K562 (cell line): ENCODE measurements at regions of chr11 and their contacts with region 1.

Region 1: GRCh38 chr11:34667810-34668582 is 47.1 kb downstream of the EHF start:
- DNase-seq: no peak
- ATAC-seq: no peak
- H3K4me3 ChIP-seq: no peak overlapping the region
- H3K27ac ChIP-seq: no peak overlapping the region
- H3K4me1 ChIP-seq: peaks cover 0 to 5% of the 10 kb centered on the region in 2 experiments; a peak in 1 of 5 replicates
- H3K27me3 ChIP-seq: no peaks in the 10 kb centered on the region
- CTCF ChIP-seq: no peak
- EP300 ChIP-seq: no peak
- POLR2A ChIP-seq: no peak
- RAD21 ChIP-seq: no peak

Region 2: DNA sequence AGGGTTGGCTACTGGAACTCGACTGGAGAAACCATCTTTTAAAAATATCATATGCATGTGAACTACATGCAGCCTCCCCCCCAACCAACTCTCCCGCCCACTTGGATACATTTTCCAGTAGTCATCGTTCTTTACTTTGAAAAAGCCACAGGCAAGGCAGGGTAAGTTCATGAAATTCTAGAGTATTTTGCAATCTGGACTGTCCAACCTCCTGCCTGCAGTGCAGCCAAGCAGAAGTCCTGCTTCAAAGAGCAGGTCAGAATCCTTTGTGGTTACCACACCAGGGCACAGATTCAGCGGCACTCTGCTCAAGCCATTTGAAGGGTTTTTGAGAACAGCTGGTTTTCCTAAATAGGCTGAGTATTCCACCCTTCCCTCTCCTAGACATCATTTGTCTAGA is 166.5 kb before region 1 on chr11:
- CTCF ChIA-PET with region 1: no interaction called
- POLR2A ChIA-PET with region 1: no interaction called
- in situ Hi-C with region 1: no loop called
- intact Hi-C with region 1: no loop called
- DNase-seq: no peak
- ATAC-seq: no peak
- H3K4me3 ChIP-seq: no peak overlapping the region
- H3K27ac ChIP-seq: no peak overlapping the region
- H3K4me1 ChIP-seq: no peaks in the 10 kb centered on the region; a peak in 1 of 5 replicates
- H3K27me3 ChIP-seq: peaks cover 3 to 8% of the 10 kb centered on the region in 2 experiments; a peak in 3 of 5 replicates
- CTCF ChIP-seq: no peak
- EP300 ChIP-seq: no peak
- POLR2A ChIP-seq: no peak
- RAD21 ChIP-seq: no peak

Region 3: DNA sequence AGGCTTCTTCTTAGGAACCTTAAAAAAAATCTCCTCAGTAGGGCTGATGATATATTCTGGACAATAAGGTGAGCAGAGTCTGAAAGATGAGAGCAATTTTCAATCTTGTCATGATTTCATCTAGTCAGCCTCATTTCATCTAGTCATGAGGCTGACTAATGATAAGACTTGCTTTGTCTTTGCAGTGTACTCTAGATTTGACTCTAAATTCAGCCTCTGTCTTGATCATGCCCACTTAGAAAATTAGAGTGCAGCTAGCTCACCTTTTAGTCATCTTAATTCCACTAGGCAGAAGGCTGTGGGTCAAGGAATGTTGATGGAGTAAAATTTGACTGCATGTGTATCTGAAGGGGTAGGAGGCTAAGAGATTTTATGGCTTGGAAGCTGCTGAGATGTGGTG is 41.6 kb before region 1 on chr11:
- CTCF ChIA-PET with region 1: no interaction called
- POLR2A ChIA-PET with region 1: interaction called, 3 read pairs
- in situ Hi-C with region 1: no loop called
- intact Hi-C with region 1: loop called (anchors 2 kb)
- DNase-seq: no peak
- ATAC-seq: no peak
- H3K4me3 ChIP-seq: no peak overlapping the region
- H3K27ac ChIP-seq: no peak overlapping the region
- H3K4me1 ChIP-seq: peaks cover 0 to 9% of the 10 kb centered on the region in 2 experiments; a peak in 3 of 5 replicates
- H3K27me3 ChIP-seq: no peaks in the 10 kb centered on the region
- CTCF ChIP-seq: no peak
- EP300 ChIP-seq: no peak
- POLR2A ChIP-seq: no peak
- RAD21 ChIP-seq: no peak